ENCODE measurements at regions of chr19 and their contacts with region 1.

Region 1: DNA sequence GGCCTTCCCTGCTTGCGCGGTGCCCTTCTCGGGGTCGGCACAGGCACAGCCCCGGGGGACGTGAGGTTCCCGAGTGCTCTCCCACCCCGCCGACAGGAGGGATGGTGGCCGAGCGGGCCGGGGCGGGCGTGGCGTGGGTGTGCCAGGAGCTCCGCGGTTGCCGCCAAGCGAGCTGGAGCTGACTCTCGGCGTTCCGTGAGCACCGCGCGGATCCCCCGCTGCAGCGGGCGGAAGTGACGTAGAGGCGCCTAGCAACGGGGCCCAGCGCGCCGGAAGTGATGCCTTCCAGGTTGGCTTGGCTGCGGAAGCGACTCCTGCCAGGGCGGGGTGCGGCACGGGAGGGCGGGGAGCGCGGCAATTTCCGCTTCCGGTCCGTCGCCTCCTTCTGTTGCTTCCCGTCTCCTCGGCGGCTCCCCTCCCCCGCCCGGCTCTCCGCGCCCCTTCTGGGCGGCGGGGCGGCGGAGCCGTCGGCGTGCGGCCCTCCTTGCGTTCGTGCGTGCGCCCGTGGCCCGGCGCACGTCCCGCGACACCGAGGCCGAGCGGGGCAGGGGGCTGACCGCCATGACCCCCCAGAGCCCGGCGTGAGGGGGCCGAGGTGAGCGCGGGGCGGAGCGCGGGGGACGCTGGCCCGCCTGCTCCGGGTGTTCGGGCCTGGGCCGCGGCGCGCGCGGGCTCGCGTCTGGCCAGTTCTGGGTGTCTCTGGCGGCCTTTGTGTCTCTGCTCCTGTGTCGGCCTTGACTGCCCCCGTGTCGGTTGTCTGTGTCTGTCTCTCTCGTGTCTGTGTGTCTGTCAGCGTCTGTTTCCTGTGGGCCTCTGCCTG is at the start of gene EPN1:
- DNase-seq: peak; percentile 99
- CTCF ChIP-seq: no peak

Region 2: GRCh38 chr19:55247608-55248099 is 427.4 kb before region 1 on chr19:
- in situ Hi-C with region 1: no loop called
- DNase-seq: no peak
- CTCF ChIP-seq: no peak

Region 3: GRCh38 chr19:56314562-56315077 is 639.6 kb after region 1 on chr19 and contains the start of gene ZSCAN5A:
- in situ Hi-C with region 1: loop called (anchors 25 kb)
- DNase-seq: peak; percentile 92
- CTCF ChIP-seq: no peak